ENCODE measurements at regions of chr3 and their contacts with region 1.

Region 1: GRCh38 chr3:42701142-42702065 is 1.2 kb downstream of the HHATL start:
- DNase-seq: peak; percentile 27
- ATAC-seq: peak; percentile 84
- H3K4me3 ChIP-seq: no peak overlapping the region
- H3K27ac ChIP-seq: no peak overlapping the region
- H3K4me1 ChIP-seq: no peaks in the 10 kb centered on the region
- H3K27me3 ChIP-seq: peaks cover 3 to 8% of the 10 kb centered on the region in 2 experiments; a peak in 2 of 5 replicates
- CTCF ChIP-seq: no peak
- EP300 ChIP-seq: no peak
- POLR2A ChIP-seq: no peak
- RAD21 ChIP-seq: no peak

Region 2: DNA sequence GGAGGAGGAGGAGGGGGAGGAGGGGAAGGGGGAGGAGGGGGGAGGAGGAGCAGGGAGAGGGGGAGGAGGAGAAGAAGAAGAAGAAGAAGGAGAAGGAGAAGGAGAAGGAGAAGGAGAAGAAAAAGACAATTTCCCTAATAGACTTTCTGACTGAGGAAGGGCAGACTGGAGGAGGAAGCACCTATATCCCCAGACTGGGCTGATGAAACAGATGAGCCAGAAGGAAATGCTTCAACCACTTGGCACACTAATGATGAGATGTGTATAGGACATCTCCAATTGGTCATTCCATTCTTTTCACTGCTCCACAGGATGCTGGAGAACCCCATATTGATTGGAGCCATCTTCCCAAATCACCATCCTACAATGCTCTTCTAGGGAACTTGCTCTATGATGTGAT is 360.9 kb before region 1 on chr3:
- CTCF ChIA-PET with region 1: no interaction called
- POLR2A ChIA-PET with region 1: no interaction called
- in situ Hi-C with region 1: no loop called
- intact Hi-C with region 1: no loop called
- DNase-seq: no peak
- ATAC-seq: no peak
- H3K4me3 ChIP-seq: no peak overlapping the region
- H3K27ac ChIP-seq: no peak overlapping the region
- H3K4me1 ChIP-seq: no peaks in the 10 kb centered on the region
- H3K27me3 ChIP-seq: no peaks in the 10 kb centered on the region
- CTCF ChIP-seq: no peak
- EP300 ChIP-seq: no peak
- POLR2A ChIP-seq: no peak
- RAD21 ChIP-seq: no peak

Region 3: DNA sequence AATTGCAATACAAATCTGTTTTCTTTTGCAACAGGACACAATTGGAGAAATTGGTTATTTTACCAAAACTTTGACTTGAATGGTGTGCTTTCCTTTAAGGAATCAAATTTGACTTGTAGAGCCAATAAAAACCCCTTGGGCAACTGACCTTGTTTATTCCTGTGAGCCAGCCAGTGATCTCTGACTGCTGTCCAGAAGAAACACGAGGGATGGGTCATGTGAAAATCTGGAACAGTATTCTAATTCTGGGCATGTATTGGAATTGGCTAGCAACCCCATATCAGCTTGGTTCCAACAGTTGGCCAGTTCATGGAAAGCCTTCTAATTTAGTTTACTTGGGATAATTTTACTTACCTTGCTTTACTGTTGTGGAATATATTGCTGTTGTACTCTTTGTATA is 20.3 kb after region 1 on chr3:
- CTCF ChIA-PET with region 1: no interaction called
- POLR2A ChIA-PET with region 1: no interaction called
- in situ Hi-C with region 1: no loop called
- intact Hi-C with region 1: loop called (anchors 1 kb)
- DNase-seq: no peak
- ATAC-seq: no peak
- H3K4me3 ChIP-seq: no peak overlapping the region
- H3K27ac ChIP-seq: no peak overlapping the region
- H3K4me1 ChIP-seq: no peaks in the 10 kb centered on the region
- H3K27me3 ChIP-seq: no peaks in the 10 kb centered on the region; a peak in 1 of 5 replicates
- CTCF ChIP-seq: no peak
- EP300 ChIP-seq: no peak
- POLR2A ChIP-seq: no peak
- RAD21 ChIP-seq: no peak

Measured in HepG2 (cell line).